Breast epithelium (tissue), 4 donors: ENCODE measurements at regions of chr7 and their contacts with region 1.

Region 1: GRCh38 chr7:150952331-150952921 is 25.7 kb downstream of the KCNH2 start:
- DNase-seq: no peak
- H3K4me3 ChIP-seq: no peak overlapping the region
- H3K27ac ChIP-seq: no peak overlapping the region
- H3K4me1 ChIP-seq: peaks cover 4 to 7% of the 10 kb centered on the region in 2 donors
- H3K27me3 ChIP-seq: peaks cover 0 to 31% of the 10 kb centered on the region in 2 donors
- CTCF ChIP-seq: no peak
- POLR2A ChIP-seq: no peak

Region 2: GRCh38 chr7:150986099-150986512 is 33.7 kb after region 1 on chr7:
- intact Hi-C with region 1: loop called (anchors 1 kb)
- DNase-seq: no peak
- H3K4me3 ChIP-seq: no peak overlapping the region
- H3K27ac ChIP-seq: no peak overlapping the region
- H3K4me1 ChIP-seq: peaks cover 0 to 3% of the 10 kb centered on the region in 2 donors
- H3K27me3 ChIP-seq: peaks cover 0 to 16% of the 10 kb centered on the region in 2 donors
- CTCF ChIP-seq: peak in 1 of 3 donors; percentile 35
- POLR2A ChIP-seq: no peak